Cardiac septum (tissue), 1 donor: ENCODE measurements at regions of chr14 and their contacts with region 1.

Region 1: DNA sequence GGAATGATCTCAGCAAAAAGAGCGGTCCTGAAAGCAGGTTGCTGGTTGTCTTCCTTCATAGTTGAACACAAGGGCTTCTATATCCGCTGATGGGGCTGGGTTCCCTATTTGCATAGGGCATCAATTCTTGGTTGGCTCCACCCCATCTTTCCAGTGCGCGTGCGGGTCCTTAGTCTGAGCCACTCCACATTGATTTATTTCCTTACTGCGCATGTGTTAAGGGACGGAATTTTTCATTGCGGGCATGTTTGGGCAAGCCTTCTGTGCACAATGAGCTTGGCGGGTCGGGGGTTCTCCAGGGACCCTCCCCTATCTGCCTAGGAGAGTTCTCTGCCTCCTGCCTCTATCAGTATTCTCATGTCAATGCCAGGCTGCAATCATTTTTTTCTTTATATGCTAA is 21.2 kb upstream of the DLGAP5 start:
- DNase-seq: no peak

Region 2: DNA sequence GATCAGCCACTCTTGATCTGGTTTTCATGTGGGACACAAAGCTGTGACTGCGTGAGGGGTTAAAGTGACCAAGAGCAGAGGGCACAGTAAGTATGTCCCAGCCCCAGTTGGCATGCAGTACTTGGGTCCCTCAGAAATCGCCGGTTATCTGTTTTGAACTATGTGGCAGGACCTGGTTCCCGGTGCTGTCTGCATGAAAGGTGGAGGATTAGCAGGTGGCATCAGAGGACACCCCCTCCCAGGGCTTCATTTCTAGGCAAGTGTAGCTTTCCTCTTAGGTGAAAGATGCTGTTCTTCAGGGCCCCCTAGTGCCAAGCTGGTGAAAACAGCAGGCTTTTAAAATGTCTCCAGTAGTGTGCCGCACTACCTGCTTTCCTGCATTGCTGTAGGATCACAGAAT is 141.9 kb after region 1 on chr14:
- intact Hi-C with region 1: loop called (anchors 2 kb)
- DNase-seq: no peak

Region 3: GRCh38 chr14:55430024-55430690 is 217.5 kb after region 1 on chr14:
- intact Hi-C with region 1: loop called (anchors 2 kb)
- DNase-seq: no peak